H1 (cell line): ENCODE measurements at regions of chr19 and their contacts with region 1.

Region 1: GRCh38 chr19:49487277-49488045 is at the start of gene RPL13A:
- DNase-seq: peak; percentile 99 to 100
- H3K4me3 ChIP-seq: peak within 1 kb of the TSS; percentile 96 to 100 (median 100)
- H3K27ac ChIP-seq: peak within 1 kb of the TSS; percentile 98
- H3K4me1 ChIP-seq: peaks cover 0 to 8% (median 2%) of the 10 kb centered on the region in 4 experiments; a peak in 3 of 7 replicates
- H3K27me3 ChIP-seq: no peaks in the 10 kb centered on the region
- CTCF ChIP-seq: no peak
- EP300 ChIP-seq: no peak
- POLR2A ChIP-seq: peak; percentile 98 to 99
- RAD21 ChIP-seq: no peak
- total RNA-seq, gene RPL13A: 3,305 and 3,520 TPM in 2 replicates

Region 2: GRCh38 chr19:49458567-49458903 is 28.9 kb before region 1 on chr19:
- CTCF ChIA-PET with region 1: no interaction called
- POLR2A ChIA-PET with region 1: interaction called, 17 read pairs
- DNase-seq: no peak
- H3K4me3 ChIP-seq: no peak overlapping the region
- H3K27ac ChIP-seq: no peak overlapping the region
- H3K4me1 ChIP-seq: no peaks in the 10 kb centered on the region; a peak in 1 of 7 replicates
- H3K27me3 ChIP-seq: no peaks in the 10 kb centered on the region
- CTCF ChIP-seq: no peak
- EP300 ChIP-seq: no peak
- POLR2A ChIP-seq: no peak; a peak in 1 of 3 replicates
- RAD21 ChIP-seq: no peak

Region 3: GRCh38 chr19:49473868-49474544 is 13.5 kb before region 1 on chr19 and contains the start of gene FLT3LG:
- CTCF ChIA-PET with region 1: interaction called, 22 read pairs
- POLR2A ChIA-PET with region 1: interaction called, 138 read pairs
- DNase-seq: peak in 1 of 2 experiments; percentile 90
- H3K4me3 ChIP-seq: peak within 1 kb of the TSS in 2 of 4 experiments; percentile 10 to 58; a peak in 3 of 8 replicates
- H3K27ac ChIP-seq: no peak within 1 kb of the TSS
- H3K4me1 ChIP-seq: peaks cover 0 to 5% (median under 1%) of the 10 kb centered on the region in 4 experiments; a peak in 3 of 7 replicates
- H3K27me3 ChIP-seq: peaks cover 0 to 5% (median 0%) of the 10 kb centered on the region in 4 experiments; a peak in 4 of 7 replicates
- CTCF ChIP-seq: peak; percentile 86 to 92 (median 88)
- EP300 ChIP-seq: no peak
- POLR2A ChIP-seq: no peak
- RAD21 ChIP-seq: peak; percentile 36 to 49; a peak in 3 of 4 replicates
- total RNA-seq, gene FLT3LG: 1.6 and 2.6 TPM in 2 replicates

Region 4: DNA sequence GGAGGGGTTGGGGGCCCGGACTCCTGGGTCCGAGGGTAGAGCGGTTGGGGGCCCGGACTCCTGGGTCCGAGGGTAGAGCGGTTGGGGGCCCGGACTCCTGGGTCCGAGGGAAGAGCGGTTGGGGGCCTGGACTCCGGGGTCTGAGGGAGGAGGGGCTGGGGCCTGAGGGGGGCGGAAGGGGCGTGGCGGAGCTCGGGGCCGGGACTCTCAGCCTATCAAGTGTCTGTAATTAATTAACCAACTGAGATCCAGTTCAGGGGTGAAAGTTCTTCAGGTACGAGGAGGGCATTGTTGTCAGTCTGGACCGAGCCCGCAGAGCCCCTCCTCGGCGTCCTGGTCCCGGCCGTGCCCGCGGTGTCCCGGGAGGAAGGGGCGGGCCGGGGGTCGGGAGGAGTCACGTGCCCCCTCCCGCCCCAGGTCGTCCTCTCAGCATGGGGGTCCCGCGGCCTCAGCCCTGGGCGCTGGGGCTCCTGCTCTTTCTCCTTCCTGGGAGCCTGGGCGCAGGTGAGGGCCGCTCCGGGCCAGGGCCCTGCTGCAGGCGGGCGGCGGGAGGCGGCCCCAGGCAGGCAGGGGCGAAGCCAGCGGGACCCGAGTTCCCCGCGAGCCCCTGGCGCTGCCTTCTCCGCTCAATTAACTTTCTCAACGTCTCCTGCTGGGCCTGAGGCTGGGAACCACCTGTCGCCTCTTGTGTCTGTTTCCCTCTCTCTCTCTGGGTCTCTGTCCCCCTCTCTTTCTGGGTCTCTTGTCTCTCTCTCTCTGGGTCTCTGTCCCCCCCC is 25.7 kb after region 1 on chr19:
- CTCF ChIA-PET with region 1: interaction called, 3 read pairs
- POLR2A ChIA-PET with region 1: interaction called, 18 read pairs
- DNase-seq: peak in 1 of 2 experiments; percentile 81
- H3K4me3 ChIP-seq: peak overlapping the region; percentile 66 to 93 (median 75)
- H3K27ac ChIP-seq: peak overlapping the region; percentile 55; the same call in 1 of the 2 replicates
- H3K4me1 ChIP-seq: peaks cover 0 to 9% (median 8%) of the 10 kb centered on the region in 4 experiments; a peak in 5 of 7 replicates
- H3K27me3 ChIP-seq: no peaks in the 10 kb centered on the region; a peak in 1 of 7 replicates
- CTCF ChIP-seq: no peak
- EP300 ChIP-seq: no peak
- POLR2A ChIP-seq: peak in 1 of 2 experiments; percentile 75; a peak in 2 of 3 replicates
- RAD21 ChIP-seq: no peak

Region 5: GRCh38 chr19:49570138-49570856 is 82.8 kb after region 1 on chr19:
- CTCF ChIA-PET with region 1: interaction called, 4 read pairs
- POLR2A ChIA-PET with region 1: interaction called, 14 read pairs
- DNase-seq: peak in 1 of 2 experiments; percentile 70
- H3K4me3 ChIP-seq: no peak overlapping the region
- H3K27ac ChIP-seq: no peak overlapping the region
- H3K4me1 ChIP-seq: peaks cover 2 to 5% (median 4%) of the 10 kb centered on the region in 4 experiments; a peak in 5 of 7 replicates
- H3K27me3 ChIP-seq: no peaks in the 10 kb centered on the region
- CTCF ChIP-seq: peak; percentile 35 to 99 (median 99)
- EP300 ChIP-seq: no peak
- POLR2A ChIP-seq: no peak
- RAD21 ChIP-seq: peak; percentile 93 to 95

Region 6: GRCh38 chr19:49590071-49590970 is 102.9 kb after region 1 on chr19:
- CTCF ChIA-PET with region 1: no interaction called
- POLR2A ChIA-PET with region 1: interaction called, 23 read pairs
- DNase-seq: peak; percentile 98 to 99
- H3K4me3 ChIP-seq: peak overlapping the region; percentile 83 to 100 (median 93)
- H3K27ac ChIP-seq: peak overlapping the region; percentile 84
- H3K4me1 ChIP-seq: peaks cover 4 to 10% (median 5%) of the 10 kb centered on the region in 4 experiments; a peak in 6 of 7 replicates
- H3K27me3 ChIP-seq: no peaks in the 10 kb centered on the region
- CTCF ChIP-seq: peak in 1 of 3 experiments; percentile 8; a peak in 1 of 4 replicates
- EP300 ChIP-seq: no peak
- POLR2A ChIP-seq: peak; percentile 81 to 90
- RAD21 ChIP-seq: no peak